A549 (cell line): ENCODE measurements at regions of chr17 and their contacts with region 1.

Region 1: DNA sequence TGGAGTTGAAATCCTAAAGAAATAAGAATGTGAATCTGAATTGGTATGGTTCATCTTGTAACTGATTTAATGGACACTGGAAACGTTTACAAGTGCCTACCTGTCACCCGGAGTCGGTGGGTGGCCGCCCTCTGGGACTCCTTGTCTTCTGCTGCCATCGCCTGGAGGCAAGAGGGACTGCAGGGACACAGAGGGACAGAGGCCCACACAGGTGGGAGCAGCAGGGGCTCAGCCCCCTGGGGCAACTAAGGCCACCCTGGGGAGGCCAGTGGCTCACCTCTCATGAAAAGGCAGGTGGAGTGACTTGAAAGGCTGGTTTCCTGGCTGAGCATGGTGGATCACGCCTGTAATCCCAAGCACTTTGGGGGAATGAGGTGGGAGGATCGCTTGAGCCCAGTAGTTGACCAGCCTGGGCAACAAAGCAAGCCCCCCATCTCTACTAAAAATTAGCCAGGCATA is 23.2 kb downstream of the TMEM92 start:
- DNase-seq: peak; percentile 81 to 90
- ATAC-seq: peak; percentile 93 to 99
- H3K4me3 ChIP-seq: no peak overlapping the region
- H3K27ac ChIP-seq: no peak overlapping the region
- H3K4me1 ChIP-seq: no peaks in the 10 kb centered on the region
- CTCF ChIP-seq: peak; percentile 99
- EP300 ChIP-seq: no peak
- POLR2A ChIP-seq: no peak
- RAD21 ChIP-seq: peak; percentile 100

Region 2: GRCh38 chr17:50107790-50108414 is 189.5 kb before region 1 on chr17:
- CTCF ChIA-PET with region 1: interaction called, 16 read pairs
- POLR2A ChIA-PET with region 1: no interaction called
- DNase-seq: no peak
- ATAC-seq: peak in 1 of 2 experiments; percentile 21; a peak in 1 of 6 replicates
- H3K4me3 ChIP-seq: no peak overlapping the region
- H3K27ac ChIP-seq: no peak overlapping the region
- H3K4me1 ChIP-seq: peaks cover 14% of the 10 kb centered on the region; the same call in 2 of the 3 replicates
- CTCF ChIP-seq: no peak
- EP300 ChIP-seq: no peak
- POLR2A ChIP-seq: no peak
- RAD21 ChIP-seq: no peak

Region 3: GRCh38 chr17:50139950-50140871 is 157.2 kb before region 1 on chr17:
- CTCF ChIA-PET with region 1: interaction called, 20 read pairs
- POLR2A ChIA-PET with region 1: no interaction called
- DNase-seq: peak; percentile 89 to 91
- ATAC-seq: peak; percentile 66 to 89
- H3K4me3 ChIP-seq: no peak overlapping the region
- H3K27ac ChIP-seq: no peak overlapping the region
- H3K4me1 ChIP-seq: peaks cover 18% of the 10 kb centered on the region
- CTCF ChIP-seq: peak; percentile 90
- EP300 ChIP-seq: no peak
- POLR2A ChIP-seq: no peak
- RAD21 ChIP-seq: peak; percentile 62 to 69; a peak in 4 of 5 replicates

Region 4: DNA sequence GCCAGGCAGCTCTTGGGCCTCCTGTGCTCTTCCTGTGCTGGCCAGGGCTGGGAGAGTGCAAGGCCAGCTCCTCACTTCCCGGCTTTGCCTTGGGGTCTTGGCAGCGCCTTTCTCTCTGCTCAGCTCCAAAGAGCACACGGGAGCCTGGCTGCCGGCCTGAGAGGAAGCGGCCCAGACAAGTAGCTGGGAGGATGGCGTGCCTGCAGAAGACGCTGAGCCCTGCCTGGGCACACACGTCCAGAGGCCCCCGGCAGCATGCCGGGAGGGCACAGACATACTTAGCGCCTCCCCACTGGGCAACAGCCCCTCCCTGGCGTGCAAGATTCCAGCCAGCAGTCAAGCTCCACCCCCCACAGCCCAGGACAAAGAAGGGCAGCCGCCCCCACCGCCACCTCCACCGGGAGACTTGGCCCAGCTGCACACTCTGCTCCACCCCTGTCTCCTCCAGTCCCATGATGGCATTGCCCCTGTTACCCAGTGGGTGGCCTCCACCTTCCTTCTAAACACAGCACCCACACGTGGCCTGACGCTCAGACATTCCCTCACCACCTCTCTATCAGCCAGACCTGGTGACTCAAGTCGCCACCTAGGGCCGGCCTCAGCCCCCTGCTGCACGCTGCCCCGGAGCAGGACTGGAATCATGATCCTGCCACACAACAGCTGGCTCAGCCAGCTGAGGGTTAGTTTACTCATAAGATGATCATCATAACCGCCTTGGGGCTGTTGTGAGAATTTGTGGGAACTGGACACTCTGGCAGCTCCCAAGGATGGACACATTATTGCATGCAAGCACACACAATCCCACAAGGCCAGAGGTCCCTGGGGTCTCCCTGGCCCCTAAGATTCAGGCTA is 119.2 kb before region 1 on chr17:
- CTCF ChIA-PET with region 1: interaction called, 326 read pairs
- POLR2A ChIA-PET with region 1: no interaction called
- DNase-seq: peak; percentile 98
- ATAC-seq: peak; percentile 86 to 93
- H3K4me3 ChIP-seq: no peak overlapping the region
- H3K27ac ChIP-seq: peak overlapping the region; percentile 90 to 95
- H3K4me1 ChIP-seq: peaks cover 61% of the 10 kb centered on the region
- CTCF ChIP-seq: peak; percentile 86
- EP300 ChIP-seq: peak; percentile 67 to 71; a peak in 3 of 5 replicates
- POLR2A ChIP-seq: peak; percentile 73
- RAD21 ChIP-seq: peak; percentile 62 to 69

Region 5: GRCh38 chr17:50269477-50270434 is 27.7 kb before region 1 on chr17:
- CTCF ChIA-PET with region 1: interaction called, 1,256 read pairs
- POLR2A ChIA-PET with region 1: no interaction called
- DNase-seq: peak; percentile 79 to 91
- ATAC-seq: peak; percentile 58 to 66
- H3K4me3 ChIP-seq: no peak overlapping the region
- H3K27ac ChIP-seq: peak overlapping the region in 1 of 2 experiments; percentile 36; a peak in 3 of 6 replicates
- H3K4me1 ChIP-seq: peaks cover 47% of the 10 kb centered on the region
- CTCF ChIP-seq: peak; percentile 93
- EP300 ChIP-seq: no peak
- POLR2A ChIP-seq: no peak
- RAD21 ChIP-seq: peak; percentile 79 to 90